ENCODE measurements at regions of chr12 and their contacts with region 1.

Region 1: GRCh38 chr12:63917864-63918799 is 73.6 kb downstream of the SRGAP1 start:
- DNase-seq: peak; percentile 91
- ATAC-seq: peak; percentile 65
- H3K4me3 ChIP-seq: peak overlapping the region; percentile 3 to 40; a peak in 3 of 4 replicates
- H3K27ac ChIP-seq: peak overlapping the region; percentile 91
- H3K4me1 ChIP-seq: peaks cover 83 to 93% of the 10 kb centered on the region in 2 experiments
- H3K27me3 ChIP-seq: no peaks in the 10 kb centered on the region
- CTCF ChIP-seq: no peak
- POLR2A ChIP-seq: no peak
- RAD21 ChIP-seq: peak; percentile 34; the same call in 1 of the 2 replicates

Region 2: GRCh38 chr12:64083285-64084210 is 165.4 kb after region 1 on chr12:
- CTCF ChIA-PET with region 1: no interaction called
- POLR2A ChIA-PET with region 1: no interaction called
- RAD21 ChIA-PET with region 1: no interaction called
- intact Hi-C with region 1: loop called (anchors 5 kb)
- DNase-seq: no peak
- ATAC-seq: no peak
- H3K4me3 ChIP-seq: no peak overlapping the region
- H3K27ac ChIP-seq: 0 out of 2 replicates have a peak overlapping the region, but pooled peaks have one; percentile 15
- H3K4me1 ChIP-seq: peaks cover 59 to 60% of the 10 kb centered on the region in 2 experiments
- H3K27me3 ChIP-seq: no peaks in the 10 kb centered on the region
- CTCF ChIP-seq: no peak
- POLR2A ChIP-seq: no peak
- RAD21 ChIP-seq: no peak

Region 3: DNA sequence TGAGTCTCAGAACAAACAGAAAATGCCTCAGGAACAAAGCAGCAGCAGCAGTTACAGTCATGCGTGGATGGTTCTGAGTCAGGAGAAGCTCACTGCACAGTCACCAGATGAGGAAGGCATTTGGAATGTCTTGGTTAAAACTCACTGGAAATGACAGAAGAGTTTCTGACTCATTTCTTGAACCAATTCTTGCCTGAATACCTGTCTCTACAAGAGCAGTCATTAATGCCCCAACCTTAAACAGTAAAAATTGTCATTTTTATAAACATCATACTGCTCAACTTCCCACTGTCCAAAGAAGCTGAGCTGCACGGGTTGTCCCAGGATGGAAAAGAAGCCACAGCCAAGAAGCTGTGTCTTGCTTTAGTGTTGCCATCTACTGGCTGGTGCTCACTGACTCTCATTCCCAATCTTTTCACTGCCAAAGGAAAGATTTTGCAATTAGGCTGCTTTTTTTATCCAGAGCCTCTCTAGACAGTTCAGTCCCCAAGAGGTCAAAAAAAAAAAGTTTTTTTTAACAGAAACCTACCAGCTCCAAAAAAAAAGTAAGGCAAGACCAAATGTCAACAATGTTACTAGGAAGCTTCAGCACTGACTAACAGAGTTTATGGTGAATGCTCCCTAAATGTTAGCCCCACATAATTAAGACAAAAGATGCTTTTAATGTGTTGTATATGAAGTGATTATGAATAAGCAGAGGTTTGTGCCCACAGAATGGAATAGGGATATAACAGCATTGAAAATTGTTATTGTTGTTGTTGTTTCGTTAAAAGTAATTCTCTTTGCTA is 263.6 kb after region 1 on chr12:
- CTCF ChIA-PET with region 1: no interaction called
- POLR2A ChIA-PET with region 1: no interaction called
- RAD21 ChIA-PET with region 1: no interaction called
- intact Hi-C with region 1: loop called (anchors 5 kb)
- DNase-seq: peak; percentile 92
- ATAC-seq: peak; percentile 94
- H3K4me3 ChIP-seq: peak overlapping the region in 1 of 2 experiments; percentile 36; a peak in 2 of 4 replicates
- H3K27ac ChIP-seq: peak overlapping the region; percentile 60; the same call in 1 of the 2 replicates
- H3K4me1 ChIP-seq: peaks cover 16 to 50% of the 10 kb centered on the region in 2 experiments
- H3K27me3 ChIP-seq: no peaks in the 10 kb centered on the region
- CTCF ChIP-seq: peak; percentile 59 to 70 (median 68); a peak in 5 of 6 replicates
- POLR2A ChIP-seq: no peak
- RAD21 ChIP-seq: peak; percentile 69

Region 4: GRCh38 chr12:64222009-64222765 is 304.1 kb after region 1 on chr12 and contains the start of gene KICS2:
- CTCF ChIA-PET with region 1: no interaction called
- POLR2A ChIA-PET with region 1: no interaction called
- RAD21 ChIA-PET with region 1: no interaction called
- intact Hi-C with region 1: loop called (anchors 10 kb)
- DNase-seq: peak; percentile 92
- ATAC-seq: peak; percentile 85
- H3K4me3 ChIP-seq: peak within 1 kb of the TSS; percentile 75 to 82
- H3K27ac ChIP-seq: peak within 1 kb of the TSS; percentile 69
- H3K4me1 ChIP-seq: peaks cover 0 to 15% of the 10 kb centered on the region in 2 experiments; a peak in 2 of 4 replicates
- H3K27me3 ChIP-seq: no peaks in the 10 kb centered on the region
- CTCF ChIP-seq: no peak
- POLR2A ChIP-seq: no peak
- RAD21 ChIP-seq: no peak
- total RNA-seq, gene KICS2: 18.1 TPM